OCI-LY7 (cell line): ENCODE measurements at regions of chr1 and their contacts with region 1.

Region 1: DNA sequence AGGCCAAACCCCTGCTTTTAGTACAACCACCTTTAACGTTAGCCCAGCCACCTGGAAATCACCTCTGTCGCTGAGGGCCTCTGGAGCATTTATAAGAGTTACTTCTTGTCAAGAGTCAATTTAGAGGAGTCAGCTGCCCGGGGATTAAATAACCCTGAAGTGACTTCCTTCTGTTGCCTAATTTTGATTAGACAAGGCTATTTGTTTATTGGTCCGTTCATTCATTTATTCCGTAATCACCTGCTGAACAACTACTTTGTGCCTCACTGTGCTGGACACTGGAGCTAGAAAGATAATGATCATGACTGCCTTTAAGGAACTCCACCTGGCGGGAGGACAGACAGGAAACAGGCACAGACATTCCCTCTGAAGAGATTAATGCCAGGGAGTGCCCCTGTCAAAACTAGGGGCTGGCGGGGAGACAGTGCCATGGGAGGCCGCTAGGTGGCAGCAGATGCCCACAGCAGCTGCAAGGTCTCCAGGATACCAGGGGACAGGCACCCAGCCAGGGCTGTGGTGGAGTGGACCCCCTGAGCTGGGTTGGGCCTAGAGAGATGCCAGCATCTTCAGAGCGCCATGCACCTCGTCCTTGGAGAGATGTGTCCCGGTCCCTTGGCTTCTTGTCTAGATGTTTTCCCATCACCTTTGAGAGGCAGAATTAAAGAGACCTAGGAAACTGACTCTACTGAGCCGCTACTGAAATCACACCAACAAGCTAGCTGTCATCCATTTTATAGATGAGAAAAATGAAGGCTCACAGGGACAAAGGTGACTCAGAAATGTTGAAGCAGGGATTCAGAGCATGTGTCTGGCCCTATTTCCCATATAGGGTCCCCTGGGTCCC is 3.7 kb downstream of the REN start:
- DNase-seq: peak; percentile 64
- H3K4me3 ChIP-seq: no peak overlapping the region
- H3K27ac ChIP-seq: no peak overlapping the region
- H3K4me1 ChIP-seq: no peaks in the 10 kb centered on the region
- CTCF ChIP-seq: peak; percentile 98

Region 2: DNA sequence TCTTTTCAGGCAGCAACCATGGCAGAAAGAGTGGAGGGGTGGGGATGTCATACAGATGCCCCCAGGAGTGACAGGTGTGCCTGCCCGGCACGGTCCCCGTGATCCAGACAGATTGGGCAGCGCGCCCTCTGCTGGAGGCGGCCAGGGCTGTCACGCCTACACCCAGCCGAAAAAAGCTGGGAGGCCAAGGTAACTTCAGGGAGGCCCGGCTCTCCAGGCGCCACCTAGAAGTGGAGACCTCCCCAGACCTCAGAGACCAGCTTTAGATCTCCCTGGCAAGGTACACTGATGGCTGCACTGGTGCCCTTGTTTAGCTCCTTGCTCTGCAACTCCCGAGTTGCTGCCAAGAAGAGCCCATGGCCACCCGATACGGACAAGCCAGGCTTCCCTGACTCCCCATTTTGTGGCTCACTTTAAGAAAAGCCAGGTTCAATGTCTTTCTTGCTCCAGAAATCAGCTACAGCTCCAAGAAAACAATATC is 44.7 kb after region 1 on chr1:
- CTCF ChIA-PET with region 1: no interaction called
- POLR2A ChIA-PET with region 1: no interaction called
- intact Hi-C with region 1: loop called (anchors 1 kb)
- DNase-seq: peak; percentile 57
- H3K4me3 ChIP-seq: no peak overlapping the region
- H3K27ac ChIP-seq: no peak overlapping the region
- H3K4me1 ChIP-seq: no peaks in the 10 kb centered on the region
- CTCF ChIP-seq: peak; percentile 89